CD4-positive, alpha-beta T cell (primary cell): ENCODE measurements at regions of chr9 and their contacts with region 1.

Region 1: DNA sequence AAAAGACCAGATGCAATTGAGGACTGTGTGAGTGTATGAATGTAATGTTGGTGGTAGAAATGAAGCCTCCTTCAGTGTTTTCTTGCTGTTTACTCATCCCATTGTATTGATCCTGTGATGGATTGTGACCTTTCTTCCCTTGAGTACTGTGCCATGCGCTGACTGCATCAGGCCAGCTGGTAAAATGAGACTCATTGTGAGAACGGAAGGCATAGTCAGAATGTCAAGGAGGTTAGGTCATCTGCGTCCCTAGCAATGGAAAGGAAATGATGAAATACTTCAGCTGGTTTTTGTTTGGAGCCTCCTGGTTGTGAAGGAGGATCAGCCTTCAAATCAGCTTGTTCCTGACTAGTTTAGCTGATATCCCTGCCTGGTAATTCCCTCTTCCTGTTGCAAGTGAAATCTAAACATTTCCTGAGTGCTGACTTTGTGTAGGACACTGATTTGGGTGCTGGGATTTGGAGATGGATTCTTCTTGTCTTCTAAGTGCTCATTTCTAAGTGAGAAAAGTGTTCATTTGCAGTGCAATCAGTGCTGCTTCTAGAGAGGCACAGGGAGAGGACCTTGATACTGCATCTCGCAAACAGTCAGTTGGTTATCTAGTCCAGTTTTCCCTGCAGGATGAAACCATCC is 35.5 kb downstream of the TNFSF8 start:
- DNase-seq: peak in 3 of 14 experiments; percentile 44 to 58 (median 47)
- ATAC-seq: no peak
- H3K4me3 ChIP-seq: no peak overlapping the region
- H3K4me3 Mint-ChIP-seq: peak overlapping the region; percentile 40
- H3K27ac ChIP-seq: no peak overlapping the region
- H3K27ac Mint-ChIP-seq: peak overlapping the region; percentile 33
- H3K4me1 ChIP-seq: peaks cover 57% of the 10 kb centered on the region
- H3K4me1 Mint-ChIP-seq: peaks cover 51% of the 10 kb centered on the region
- H3K27me3 ChIP-seq: no peaks in the 10 kb centered on the region
- H3K27me3 Mint-ChIP-seq: no peaks in the 10 kb centered on the region
- CTCF ChIP-seq: no peak

Region 2: GRCh38 chr9:114696814-114697544 is 197.9 kb before region 1 on chr9:
- CTCF ChIA-PET with region 1: no interaction called
- POLR2A ChIA-PET with region 1: no interaction called
- intact Hi-C with region 1: no loop called
- DNase-seq: peak in 6 of 14 experiments; percentile 5 to 55 (median 30)
- ATAC-seq: peak; percentile 48
- H3K4me3 ChIP-seq: no peak overlapping the region
- H3K4me3 Mint-ChIP-seq: no peak overlapping the region
- H3K27ac ChIP-seq: no peak overlapping the region
- H3K27ac Mint-ChIP-seq: peak overlapping the region; percentile 61
- H3K4me1 ChIP-seq: peaks cover 21% of the 10 kb centered on the region
- H3K4me1 Mint-ChIP-seq: peaks cover 19% of the 10 kb centered on the region
- H3K27me3 ChIP-seq: no peaks in the 10 kb centered on the region
- H3K27me3 Mint-ChIP-seq: no peaks in the 10 kb centered on the region
- CTCF ChIP-seq: no peak

Region 3: GRCh38 chr9:114869845-114870244 is 25.1 kb before region 1 on chr9:
- CTCF ChIA-PET with region 1: no interaction called
- POLR2A ChIA-PET with region 1: interaction called, 22 read pairs
- intact Hi-C with region 1: loop called in 1 of 2 experiments (anchors 5 kb)
- DNase-seq: peak in 9 of 14 experiments; percentile 1 to 74 (median 32)
- ATAC-seq: no peak
- H3K4me3 ChIP-seq: no peak overlapping the region
- H3K4me3 Mint-ChIP-seq: peak overlapping the region; percentile 62
- H3K27ac ChIP-seq: peak overlapping the region; percentile 36 to 47
- H3K27ac Mint-ChIP-seq: peak overlapping the region; percentile 42
- H3K4me1 ChIP-seq: peaks cover 17% of the 10 kb centered on the region
- H3K4me1 Mint-ChIP-seq: peaks cover 27% of the 10 kb centered on the region
- H3K27me3 ChIP-seq: no peaks in the 10 kb centered on the region
- H3K27me3 Mint-ChIP-seq: no peaks in the 10 kb centered on the region
- CTCF ChIP-seq: no peak

Region 4: DNA sequence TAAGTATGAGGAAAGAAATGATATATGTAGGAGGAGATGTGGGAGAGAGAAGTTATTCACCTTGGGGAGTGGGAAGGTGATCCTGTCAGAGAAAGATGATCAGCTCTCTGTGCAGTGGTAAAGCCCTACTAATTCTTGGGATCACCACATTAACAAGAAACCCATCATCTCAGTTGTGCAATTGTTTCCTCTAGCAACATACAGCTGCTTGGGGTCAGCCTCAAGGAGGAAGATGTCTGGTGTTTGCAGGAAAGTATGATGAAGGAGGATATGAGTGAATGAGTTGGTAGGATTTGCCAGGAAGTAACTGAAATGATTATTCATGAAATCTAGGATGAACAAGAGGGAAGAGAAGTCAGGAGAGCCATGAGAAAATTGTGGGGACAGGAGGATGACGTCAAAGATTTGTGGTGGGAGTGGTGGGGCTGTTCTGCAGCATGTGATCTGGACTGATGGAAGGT is 14.6 kb before region 1 on chr9:
- CTCF ChIA-PET with region 1: no interaction called
- POLR2A ChIA-PET with region 1: interaction called, 6 read pairs
- intact Hi-C with region 1: loop called in 1 of 2 experiments (anchors 2 kb)
- DNase-seq: no peak
- ATAC-seq: no peak
- H3K4me3 ChIP-seq: no peak overlapping the region
- H3K4me3 Mint-ChIP-seq: no peak overlapping the region
- H3K27ac ChIP-seq: no peak overlapping the region
- H3K27ac Mint-ChIP-seq: no peak overlapping the region
- H3K4me1 ChIP-seq: peaks cover 5% of the 10 kb centered on the region
- H3K4me1 Mint-ChIP-seq: peaks cover 4% of the 10 kb centered on the region
- H3K27me3 ChIP-seq: no peaks in the 10 kb centered on the region
- H3K27me3 Mint-ChIP-seq: no peaks in the 10 kb centered on the region
- CTCF ChIP-seq: no peak

Region 5: DNA sequence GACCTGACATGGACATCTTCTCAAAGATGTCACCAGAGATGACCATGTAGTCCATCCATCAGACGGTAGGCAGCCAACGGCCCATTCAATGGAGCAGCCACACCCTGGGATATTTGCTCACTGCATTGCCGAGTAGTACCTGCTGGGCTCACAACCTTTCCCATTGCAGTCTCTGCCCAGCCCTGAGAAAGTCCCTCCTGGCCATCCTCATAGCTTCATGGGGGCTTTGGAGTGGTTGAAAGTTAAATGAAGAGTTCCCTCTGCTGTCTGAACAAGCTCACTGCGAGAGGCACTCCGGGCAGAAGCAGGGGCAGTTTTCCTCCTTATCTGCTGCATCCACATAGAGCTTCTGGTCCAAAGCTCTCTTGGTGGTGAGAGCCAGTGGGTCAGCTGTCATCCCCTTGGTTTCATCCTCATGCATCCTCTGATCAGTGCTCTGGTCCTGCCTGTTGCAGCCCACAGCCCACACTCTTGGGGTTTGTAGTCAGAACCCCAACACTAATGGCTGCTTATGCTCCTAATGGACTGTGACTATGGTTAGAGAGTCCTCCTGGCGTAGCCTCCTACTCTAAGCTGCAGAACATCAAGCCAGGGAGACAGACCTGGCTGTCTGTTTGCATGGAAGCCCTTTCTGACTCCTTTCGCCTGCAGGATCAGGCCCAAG is 12.1 kb after region 1 on chr9:
- CTCF ChIA-PET with region 1: interaction called, 6 read pairs
- POLR2A ChIA-PET with region 1: interaction called, 28 read pairs
- intact Hi-C with region 1: no loop called
- DNase-seq: peak in 4 of 14 experiments; percentile 34 to 66 (median 56)
- ATAC-seq: no peak
- H3K4me3 ChIP-seq: no peak overlapping the region
- H3K4me3 Mint-ChIP-seq: no peak overlapping the region
- H3K27ac ChIP-seq: peak overlapping the region in 1 of 2 donors; percentile 7
- H3K27ac Mint-ChIP-seq: peak overlapping the region; percentile 85
- H3K4me1 ChIP-seq: peaks cover 84% of the 10 kb centered on the region
- H3K4me1 Mint-ChIP-seq: peaks cover 55% of the 10 kb centered on the region
- H3K27me3 ChIP-seq: no peaks in the 10 kb centered on the region
- H3K27me3 Mint-ChIP-seq: no peaks in the 10 kb centered on the region
- CTCF ChIP-seq: peak; percentile 69

Region 6: GRCh38 chr9:114919611-114920010 is 24.7 kb after region 1 on chr9:
- CTCF ChIA-PET with region 1: no interaction called
- POLR2A ChIA-PET with region 1: interaction called, 14 read pairs
- intact Hi-C with region 1: no loop called
- DNase-seq: no peak
- ATAC-seq: no peak
- H3K4me3 ChIP-seq: no peak overlapping the region
- H3K4me3 Mint-ChIP-seq: no peak overlapping the region
- H3K27ac ChIP-seq: no peak overlapping the region
- H3K27ac Mint-ChIP-seq: peak overlapping the region; percentile 46
- H3K4me1 ChIP-seq: peaks cover 68% of the 10 kb centered on the region
- H3K4me1 Mint-ChIP-seq: peaks cover 96% of the 10 kb centered on the region
- H3K27me3 ChIP-seq: no peaks in the 10 kb centered on the region
- H3K27me3 Mint-ChIP-seq: no peaks in the 10 kb centered on the region
- CTCF ChIP-seq: no peak